ENCODE measurements at regions of chr1 and their contacts with region 1.

Region 1: DNA sequence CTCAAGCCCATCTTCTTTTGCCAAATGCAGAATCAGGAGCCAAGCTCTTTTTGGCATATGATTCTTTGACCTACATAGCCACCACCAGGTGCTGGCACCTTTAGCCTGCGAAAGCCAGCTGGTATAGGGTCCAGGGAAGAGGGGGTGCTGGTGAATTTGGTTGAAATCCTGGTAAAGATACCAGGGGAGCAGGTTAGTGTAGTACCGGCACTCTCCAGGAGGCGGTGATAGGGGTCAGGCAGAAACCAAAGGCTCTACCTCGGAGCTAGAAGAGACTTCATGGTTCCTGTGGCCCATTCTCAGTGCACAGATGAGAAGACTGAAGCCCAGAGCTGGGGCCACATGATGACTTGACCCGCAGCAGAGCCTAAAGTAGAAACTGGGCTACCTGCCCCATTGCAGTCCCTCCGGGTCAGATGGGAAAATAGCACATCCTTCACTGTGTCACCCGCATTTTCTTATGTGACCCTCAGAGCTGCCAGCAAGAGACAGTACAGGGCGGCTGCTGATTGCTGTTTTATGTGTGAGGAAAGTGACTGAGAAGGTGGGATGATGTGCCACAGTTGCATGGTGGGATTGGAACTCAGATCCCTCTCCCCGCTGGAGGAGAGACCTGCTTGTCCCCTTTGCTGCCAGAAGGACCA is 36.0 kb upstream of the IL19 start:
- DNase-seq: peak; percentile 56
- H3K4me3 Mint-ChIP-seq: no peak overlapping the region
- H3K27ac Mint-ChIP-seq: no peak overlapping the region
- H3K4me1 Mint-ChIP-seq: peaks cover 61% of the 10 kb centered on the region
- H3K27me3 Mint-ChIP-seq: no peaks in the 10 kb centered on the region

Region 2: GRCh38 chr1:206757524-206758266 is 23.1 kb after region 1 on chr1:
- intact Hi-C with region 1: loop called (anchors 1 kb)
- DNase-seq: no peak
- H3K4me3 Mint-ChIP-seq: no peak overlapping the region
- H3K27ac Mint-ChIP-seq: no peak overlapping the region
- H3K4me1 Mint-ChIP-seq: peaks cover 21% of the 10 kb centered on the region
- H3K27me3 Mint-ChIP-seq: peaks cover 27% of the 10 kb centered on the region

Region 3: DNA sequence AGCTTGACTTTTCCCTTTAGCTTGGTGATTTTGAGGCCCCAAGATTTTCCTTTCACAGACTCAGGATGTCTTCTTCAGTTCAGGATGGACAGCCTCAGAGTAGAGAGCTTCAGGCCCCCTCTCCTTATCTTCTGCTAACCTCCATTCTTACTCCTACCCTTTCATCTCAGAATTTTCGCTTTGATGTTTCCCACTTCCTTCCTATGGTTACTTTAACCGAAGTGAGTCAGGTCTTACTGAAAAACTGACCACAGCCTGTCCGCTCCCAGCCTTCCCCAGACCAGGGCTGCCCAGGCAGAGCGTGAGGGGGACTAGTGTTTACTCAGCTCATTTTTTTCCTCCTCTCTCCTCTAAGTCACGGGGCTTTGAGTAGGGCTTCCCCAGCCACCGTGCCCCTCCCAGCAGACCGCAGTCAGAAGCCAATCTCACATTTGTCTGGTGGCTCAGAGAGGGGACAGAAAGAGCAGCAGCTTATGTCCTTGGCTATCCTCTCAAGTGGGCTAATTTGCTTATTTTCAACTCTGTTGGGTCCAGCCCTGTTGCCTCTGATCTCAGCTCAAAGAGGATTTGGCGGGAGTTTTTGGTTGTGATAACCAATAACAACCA is 31.7 kb after region 1 on chr1:
- intact Hi-C with region 1: loop called (anchors 1 kb)
- DNase-seq: peak; percentile 64
- H3K4me3 Mint-ChIP-seq: peak overlapping the region; percentile 29
- H3K27ac Mint-ChIP-seq: no peak overlapping the region
- H3K4me1 Mint-ChIP-seq: peaks cover 74% of the 10 kb centered on the region
- H3K27me3 Mint-ChIP-seq: peaks cover 34% of the 10 kb centered on the region

Region 4: GRCh38 chr1:206784471-206784903 is 49.9 kb after region 1 on chr1:
- intact Hi-C with region 1: loop called (anchors 1 kb)
- DNase-seq: peak; percentile 87
- H3K4me3 Mint-ChIP-seq: peak overlapping the region; percentile 72
- H3K27ac Mint-ChIP-seq: peak overlapping the region; percentile 93
- H3K4me1 Mint-ChIP-seq: peaks cover 69% of the 10 kb centered on the region
- H3K27me3 Mint-ChIP-seq: peaks cover 14% of the 10 kb centered on the region